Psoas muscle (tissue), 8 donors: ENCODE measurements at regions of chr19 and their contacts with region 1.

Region 1: GRCh38 chr19:2151339-2152229 is at the start of gene AP3D1:
- DNase-seq: peak; percentile 100
- ATAC-seq: peak; percentile 94 to 97 (median 96)
- H3K4me3 ChIP-seq: peak within 1 kb of the TSS; percentile 100
- H3K27ac ChIP-seq: peak within 1 kb of the TSS; percentile 96
- H3K4me1 ChIP-seq: peaks cover 37% of the 10 kb centered on the region
- H3K27me3 ChIP-seq: no peaks in the 10 kb centered on the region
- CTCF ChIP-seq: no peak
- total RNA-seq, gene AP3D1: 71.9 to 103 (median 91.4) TPM

Region 2: DNA sequence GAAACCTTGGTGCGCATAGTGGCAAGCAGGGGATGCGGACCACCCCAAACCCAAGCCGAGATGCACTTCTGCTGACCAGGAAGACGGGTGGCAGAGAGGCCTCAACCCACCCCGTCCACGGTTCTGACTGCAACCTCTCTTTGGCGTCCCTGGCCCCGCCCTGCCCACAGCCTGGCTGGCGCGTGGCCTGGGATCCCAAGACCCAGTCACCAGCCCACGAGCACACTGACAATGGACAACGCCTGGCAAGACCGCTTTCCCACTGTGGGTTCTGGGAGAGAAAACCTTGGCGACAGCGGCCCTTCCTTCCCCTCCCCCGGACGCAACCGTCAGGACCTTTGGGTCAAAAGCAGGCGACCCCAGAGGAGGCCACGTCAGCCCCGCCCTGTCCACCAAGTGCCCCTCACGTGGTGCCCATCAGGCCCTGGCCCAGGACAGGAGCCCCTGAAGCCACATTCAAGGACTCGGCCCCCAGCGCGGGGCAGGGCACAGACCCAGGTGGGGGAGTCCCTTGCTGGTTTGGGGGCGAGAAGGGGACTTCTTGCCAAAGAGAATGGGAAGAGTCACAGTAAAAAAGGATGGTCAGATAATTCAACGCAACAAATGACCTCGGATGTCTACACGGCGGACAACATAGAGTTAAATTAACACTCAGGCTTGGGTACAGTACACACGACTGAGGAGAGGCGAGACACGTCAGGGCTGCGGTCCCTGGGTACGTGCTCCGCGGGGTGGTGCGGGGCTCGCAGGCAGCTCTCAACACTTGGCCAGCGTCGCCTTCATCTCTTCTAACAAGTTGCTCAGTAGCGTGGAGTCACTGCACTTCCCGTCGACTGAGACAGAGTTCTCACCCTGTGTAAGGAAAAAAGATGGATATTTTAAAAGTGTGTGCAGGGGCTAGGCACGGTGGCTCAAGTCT is 49.9 kb before region 1 on chr19:
- intact Hi-C with region 1: loop called in 1 of 2 experiments (anchors 5 kb)
- DNase-seq: no peak
- ATAC-seq: no peak
- H3K4me3 ChIP-seq: no peak overlapping the region
- H3K27ac ChIP-seq: no peak overlapping the region
- H3K4me1 ChIP-seq: peaks cover 9% of the 10 kb centered on the region
- H3K27me3 ChIP-seq: no peaks in the 10 kb centered on the region
- CTCF ChIP-seq: no peak

Region 3: GRCh38 chr19:2199215-2199614 is 47.6 kb after region 1 on chr19:
- intact Hi-C with region 1: loop called in 1 of 2 experiments (anchors 5 kb)
- DNase-seq: no peak
- ATAC-seq: peak; percentile 24 to 56 (median 39)
- H3K4me3 ChIP-seq: no peak overlapping the region
- H3K27ac ChIP-seq: no peak overlapping the region
- H3K4me1 ChIP-seq: peaks cover 5% of the 10 kb centered on the region
- H3K27me3 ChIP-seq: no peaks in the 10 kb centered on the region
- CTCF ChIP-seq: peak; percentile 13

Region 4: GRCh38 chr19:2213799-2214198 is 62.2 kb after region 1 on chr19:
- intact Hi-C with region 1: no loop called
- DNase-seq: peak in 1 of 2 donors; percentile 71
- ATAC-seq: peak; percentile 34 to 51 (median 48)
- H3K4me3 ChIP-seq: no peak overlapping the region
- H3K27ac ChIP-seq: no peak overlapping the region
- H3K4me1 ChIP-seq: no peaks in the 10 kb centered on the region
- H3K27me3 ChIP-seq: no peaks in the 10 kb centered on the region
- CTCF ChIP-seq: no peak

Region 5: GRCh38 chr19:2273356-2274184 is 122.0 kb after region 1 on chr19:
- intact Hi-C with region 1: loop called (anchors 5 to 10 kb)
- DNase-seq: peak; percentile 84 to 91
- ATAC-seq: peak; percentile 13 to 32 (median 20)
- H3K4me3 ChIP-seq: peak overlapping the region; percentile 97
- H3K27ac ChIP-seq: peak overlapping the region; percentile 99
- H3K4me1 ChIP-seq: peaks cover 49% of the 10 kb centered on the region
- H3K27me3 ChIP-seq: no peaks in the 10 kb centered on the region
- CTCF ChIP-seq: peak; percentile 95

Region 6: DNA sequence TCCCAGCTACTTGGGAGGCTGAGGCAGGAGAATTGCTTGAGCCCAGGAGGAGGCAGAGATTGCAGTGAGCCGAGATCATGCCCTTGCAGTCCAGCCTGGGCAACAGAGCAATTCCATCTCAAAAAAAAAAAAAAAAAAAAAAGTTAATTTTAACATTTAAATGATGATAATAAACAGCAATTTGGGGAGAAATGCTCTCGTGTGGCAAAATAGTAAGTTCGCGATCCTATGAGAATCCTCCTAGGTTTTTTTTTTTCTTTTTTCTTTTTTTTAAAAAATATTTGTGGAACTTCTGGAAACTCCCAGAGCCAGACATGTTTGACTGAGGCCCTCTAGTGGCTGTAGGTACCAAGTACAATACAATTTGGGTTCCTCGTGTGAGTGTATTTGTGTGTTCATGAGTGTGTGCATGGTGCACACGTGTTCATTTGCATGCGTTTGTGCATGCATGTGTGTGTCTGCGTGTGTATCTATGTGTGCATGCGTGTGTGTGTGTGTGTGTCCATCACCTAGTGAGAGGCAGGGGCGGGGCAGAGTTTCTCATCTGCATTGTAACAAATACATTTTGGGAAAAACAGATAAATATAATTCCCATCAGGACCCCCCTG is 239.6 kb after region 1 on chr19:
- intact Hi-C with region 1: loop called (anchors 10 kb)
- DNase-seq: no peak
- ATAC-seq: peak; percentile 64 to 80 (median 72)
- H3K4me3 ChIP-seq: no peak overlapping the region
- H3K27ac ChIP-seq: no peak overlapping the region
- H3K4me1 ChIP-seq: no peaks in the 10 kb centered on the region
- H3K27me3 ChIP-seq: peaks cover 0 to 5% (median 0%) of the 10 kb centered on the region in 3 donors
- CTCF ChIP-seq: peak; percentile 71